ENCODE measurements at regions of chr20 and their contacts with region 1.

Region 1: DNA sequence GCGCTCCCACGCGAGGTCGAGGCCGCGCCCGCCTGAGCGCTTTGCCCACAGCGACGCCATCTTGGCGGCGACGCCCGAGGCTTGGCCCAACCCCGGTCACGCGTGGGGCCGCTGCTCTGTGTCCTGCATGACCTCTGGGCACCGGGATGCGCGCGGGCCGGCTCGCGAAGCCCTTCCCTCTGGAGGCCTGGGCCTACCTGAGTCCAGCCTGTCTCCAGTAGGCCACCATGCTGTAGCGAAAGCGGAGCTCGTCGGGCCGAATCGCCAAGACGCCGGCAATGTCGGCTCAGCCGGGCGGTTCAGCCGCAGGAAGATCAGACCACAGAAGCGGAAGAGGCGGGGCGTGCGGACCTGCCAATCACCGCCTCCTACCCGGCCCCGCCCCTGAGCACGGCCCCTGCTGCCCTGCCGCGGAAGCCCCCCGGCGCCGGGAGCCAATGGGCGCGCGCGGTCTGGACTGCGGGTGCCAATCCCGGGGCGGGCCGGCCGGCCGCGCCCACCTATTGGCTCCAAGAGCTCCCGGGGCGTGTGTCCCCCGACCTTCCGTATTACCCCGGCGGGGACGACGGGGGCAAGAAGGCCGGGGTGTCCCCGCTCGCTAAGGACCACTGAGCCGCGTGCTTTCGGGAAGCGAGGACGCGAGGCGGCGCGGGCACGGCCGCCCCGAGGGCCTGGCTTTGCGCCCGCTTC is at the start of gene ATP5F1E:
- DNase-seq: peak; percentile 94 to 99 (median 96)
- ATAC-seq: peak; percentile 95
- H3K4me3 ChIP-seq: peak within 1 kb of the TSS; percentile 76
- H3K4me3 Mint-ChIP-seq: peak within 1 kb of the TSS; percentile 97
- H3K27ac ChIP-seq: peak within 1 kb of the TSS; percentile 81 to 86
- H3K27ac Mint-ChIP-seq: peak within 1 kb of the TSS; percentile 87
- H3K4me1 ChIP-seq: peaks cover 31% of the 10 kb centered on the region
- H3K4me1 Mint-ChIP-seq: peaks cover 61% of the 10 kb centered on the region
- H3K27me3 ChIP-seq: no peaks in the 10 kb centered on the region
- H3K27me3 Mint-ChIP-seq: no peaks in the 10 kb centered on the region
- CTCF ChIP-seq: no peak
- total RNA-seq, gene ATP5F1E: 51.1 to 53.1 TPM

Region 2: DNA sequence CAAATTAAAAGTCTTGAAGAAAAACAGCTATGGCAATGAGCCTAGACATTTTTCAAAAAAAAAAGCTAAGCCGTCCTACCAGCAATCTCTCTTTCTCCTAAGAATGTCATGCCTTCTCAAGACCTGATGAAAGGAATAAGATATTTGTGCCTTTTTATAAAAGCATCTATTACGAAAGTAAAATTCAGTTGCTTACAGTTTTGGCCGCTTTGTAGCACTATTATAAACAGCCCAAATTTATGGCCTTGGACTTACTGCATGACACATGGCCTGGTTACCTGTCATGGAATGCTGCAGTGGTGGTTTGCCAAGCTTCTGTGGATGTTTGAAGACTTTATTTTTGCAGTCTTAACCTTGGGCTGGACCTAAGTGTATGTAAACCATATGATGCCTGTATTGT is 665.3 kb before region 1 on chr20:
- CTCF ChIA-PET with region 1: no interaction called
- POLR2A ChIA-PET with region 1: no interaction called
- intact Hi-C with region 1: no loop called
- DNase-seq: no peak
- ATAC-seq: no peak
- H3K4me3 ChIP-seq: no peak overlapping the region
- H3K4me3 Mint-ChIP-seq: no peak overlapping the region
- H3K27ac ChIP-seq: no peak overlapping the region
- H3K27ac Mint-ChIP-seq: no peak overlapping the region
- H3K4me1 ChIP-seq: no peaks in the 10 kb centered on the region
- H3K4me1 Mint-ChIP-seq: no peaks in the 10 kb centered on the region
- H3K27me3 ChIP-seq: no peaks in the 10 kb centered on the region
- H3K27me3 Mint-ChIP-seq: no peaks in the 10 kb centered on the region
- CTCF ChIP-seq: no peak

Region 3: GRCh38 chr20:58888521-58889333 is 143.4 kb before region 1 on chr20:
- CTCF ChIA-PET with region 1: no interaction called
- POLR2A ChIA-PET with region 1: interaction called, 54 read pairs
- intact Hi-C with region 1: loop called (anchors 2 to 5 kb)
- DNase-seq: peak; percentile 69 to 93 (median 82)
- ATAC-seq: peak; percentile 49
- H3K4me3 ChIP-seq: peak overlapping the region; percentile 83
- H3K4me3 Mint-ChIP-seq: peak overlapping the region; percentile 89
- H3K27ac ChIP-seq: peak overlapping the region; percentile 65 to 72
- H3K27ac Mint-ChIP-seq: peak overlapping the region; percentile 95
- H3K4me1 ChIP-seq: peaks cover 11% of the 10 kb centered on the region
- H3K4me1 Mint-ChIP-seq: peaks cover 52% of the 10 kb centered on the region
- H3K27me3 ChIP-seq: no peaks in the 10 kb centered on the region
- H3K27me3 Mint-ChIP-seq: no peaks in the 10 kb centered on the region
- CTCF ChIP-seq: no peak

Region 4: DNA sequence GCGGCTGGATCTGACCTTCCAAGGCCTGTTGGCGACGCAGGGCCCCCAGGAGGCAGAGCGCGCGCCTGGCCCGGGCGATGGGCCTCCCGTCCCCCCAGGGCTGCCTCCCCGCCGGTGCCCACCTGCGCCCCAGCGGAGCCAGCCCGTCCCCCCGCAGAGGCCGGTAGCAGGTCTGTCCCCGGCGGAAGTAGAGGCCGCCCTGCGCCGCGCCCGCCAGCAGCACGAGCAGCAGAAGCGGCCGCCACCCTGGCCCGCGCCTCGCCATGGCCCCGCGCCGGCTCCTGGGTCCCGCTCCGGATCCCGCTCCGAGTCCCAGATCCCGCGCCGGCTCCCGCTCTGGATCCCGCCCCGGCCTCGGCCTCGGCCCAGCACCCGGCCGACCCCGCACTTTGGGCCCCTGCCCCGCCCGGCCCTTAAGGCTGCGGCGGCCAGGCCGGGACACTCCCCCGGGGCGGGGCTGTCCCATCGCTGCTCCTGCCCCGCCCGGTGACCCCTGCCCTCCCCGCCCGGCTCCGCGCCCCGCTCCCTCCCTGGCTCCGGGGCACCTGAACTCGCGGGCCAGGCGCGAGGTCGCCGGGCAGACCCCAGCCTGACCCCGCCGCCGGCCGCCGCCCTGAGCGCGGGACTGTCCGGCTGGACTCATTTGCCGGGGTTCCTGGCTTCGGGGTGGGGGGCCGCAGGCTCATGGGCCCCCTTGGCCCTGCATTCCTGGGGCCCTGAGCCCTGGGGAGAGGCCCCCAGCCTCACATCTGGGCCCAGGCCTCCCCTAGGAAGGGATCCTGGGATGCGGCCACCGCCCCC is 25.1 kb before region 1 on chr20 and contains the start of gene CTSZ:
- CTCF ChIA-PET with region 1: interaction called, 3 read pairs
- POLR2A ChIA-PET with region 1: interaction called, 17 read pairs
- intact Hi-C with region 1: loop called in 1 of 2 experiments (anchors 2 kb)
- DNase-seq: peak in 10 of 14 experiments; percentile 14 to 73 (median 36)
- ATAC-seq: peak; percentile 55
- H3K4me3 ChIP-seq: peak within 1 kb of the TSS; percentile 72
- H3K4me3 Mint-ChIP-seq: peak within 1 kb of the TSS; percentile 88
- H3K27ac ChIP-seq: peak within 1 kb of the TSS in 1 of 2 donors; percentile 48
- H3K27ac Mint-ChIP-seq: peak within 1 kb of the TSS; percentile 78
- H3K4me1 ChIP-seq: peaks cover 45% of the 10 kb centered on the region
- H3K4me1 Mint-ChIP-seq: peaks cover 42% of the 10 kb centered on the region
- H3K27me3 ChIP-seq: no peaks in the 10 kb centered on the region
- H3K27me3 Mint-ChIP-seq: no peaks in the 10 kb centered on the region
- CTCF ChIP-seq: no peak
- total RNA-seq, gene CTSZ: 14.7 to 17.7 TPM

Region 5: DNA sequence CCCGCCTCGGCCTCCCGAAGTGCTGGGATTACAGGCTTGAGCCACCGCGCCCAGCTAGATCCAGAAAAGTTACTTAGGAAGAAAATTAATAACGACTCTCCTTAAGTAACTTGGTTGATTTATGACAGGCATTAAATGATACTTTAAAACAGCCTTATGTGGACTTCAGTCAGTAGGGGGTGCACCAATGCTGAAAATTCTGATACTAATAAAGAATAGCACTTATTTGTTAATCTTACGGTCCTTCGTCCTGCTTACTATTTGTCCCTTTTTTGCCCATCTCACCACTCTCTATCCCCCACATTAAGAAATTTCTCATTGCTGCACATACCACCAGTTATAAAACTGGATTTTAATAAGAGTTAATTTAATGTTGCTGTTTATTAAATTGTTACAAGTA is 23.1 kb after region 1 on chr20:
- CTCF ChIA-PET with region 1: interaction called, 3 read pairs
- POLR2A ChIA-PET with region 1: interaction called, 12 read pairs
- intact Hi-C with region 1: no loop called
- DNase-seq: peak in 4 of 14 experiments; percentile 40 to 58 (median 53)
- ATAC-seq: no peak
- H3K4me3 ChIP-seq: no peak overlapping the region
- H3K4me3 Mint-ChIP-seq: no peak overlapping the region
- H3K27ac ChIP-seq: no peak overlapping the region
- H3K27ac Mint-ChIP-seq: no peak overlapping the region
- H3K4me1 ChIP-seq: no peaks in the 10 kb centered on the region
- H3K4me1 Mint-ChIP-seq: no peaks in the 10 kb centered on the region
- H3K27me3 ChIP-seq: peaks cover 6 to 7% of the 10 kb centered on the region in 2 experiments
- H3K27me3 Mint-ChIP-seq: peaks cover 24% of the 10 kb centered on the region
- CTCF ChIP-seq: no peak

Region 6: DNA sequence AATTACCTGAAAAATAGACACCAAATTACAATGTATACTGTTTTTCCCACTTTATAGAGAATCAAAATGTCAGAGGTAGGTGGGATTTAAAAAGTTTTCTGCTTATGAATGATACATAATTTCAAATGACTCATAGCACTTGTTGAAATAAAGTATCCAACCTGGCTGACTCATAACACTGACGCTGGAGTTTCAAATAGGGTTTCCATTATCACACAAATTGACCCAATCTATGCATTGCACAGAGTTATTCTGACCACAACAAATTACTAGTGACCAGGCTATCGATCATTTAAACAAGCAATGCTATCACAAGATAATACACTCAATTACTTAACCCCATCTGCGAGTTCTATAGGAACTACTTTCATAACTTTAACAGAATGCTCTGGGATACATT is 42.3 kb after region 1 on chr20:
- CTCF ChIA-PET with region 1: no interaction called
- POLR2A ChIA-PET with region 1: no interaction called
- intact Hi-C with region 1: no loop called
- DNase-seq: no peak
- ATAC-seq: no peak
- H3K4me3 ChIP-seq: no peak overlapping the region
- H3K4me3 Mint-ChIP-seq: no peak overlapping the region
- H3K27ac ChIP-seq: no peak overlapping the region
- H3K27ac Mint-ChIP-seq: no peak overlapping the region
- H3K4me1 ChIP-seq: no peaks in the 10 kb centered on the region
- H3K4me1 Mint-ChIP-seq: no peaks in the 10 kb centered on the region
- H3K27me3 ChIP-seq: peaks cover 0 to 9% of the 10 kb centered on the region in 2 experiments
- H3K27me3 Mint-ChIP-seq: peaks cover 44% of the 10 kb centered on the region
- CTCF ChIP-seq: no peak

Region 7: DNA sequence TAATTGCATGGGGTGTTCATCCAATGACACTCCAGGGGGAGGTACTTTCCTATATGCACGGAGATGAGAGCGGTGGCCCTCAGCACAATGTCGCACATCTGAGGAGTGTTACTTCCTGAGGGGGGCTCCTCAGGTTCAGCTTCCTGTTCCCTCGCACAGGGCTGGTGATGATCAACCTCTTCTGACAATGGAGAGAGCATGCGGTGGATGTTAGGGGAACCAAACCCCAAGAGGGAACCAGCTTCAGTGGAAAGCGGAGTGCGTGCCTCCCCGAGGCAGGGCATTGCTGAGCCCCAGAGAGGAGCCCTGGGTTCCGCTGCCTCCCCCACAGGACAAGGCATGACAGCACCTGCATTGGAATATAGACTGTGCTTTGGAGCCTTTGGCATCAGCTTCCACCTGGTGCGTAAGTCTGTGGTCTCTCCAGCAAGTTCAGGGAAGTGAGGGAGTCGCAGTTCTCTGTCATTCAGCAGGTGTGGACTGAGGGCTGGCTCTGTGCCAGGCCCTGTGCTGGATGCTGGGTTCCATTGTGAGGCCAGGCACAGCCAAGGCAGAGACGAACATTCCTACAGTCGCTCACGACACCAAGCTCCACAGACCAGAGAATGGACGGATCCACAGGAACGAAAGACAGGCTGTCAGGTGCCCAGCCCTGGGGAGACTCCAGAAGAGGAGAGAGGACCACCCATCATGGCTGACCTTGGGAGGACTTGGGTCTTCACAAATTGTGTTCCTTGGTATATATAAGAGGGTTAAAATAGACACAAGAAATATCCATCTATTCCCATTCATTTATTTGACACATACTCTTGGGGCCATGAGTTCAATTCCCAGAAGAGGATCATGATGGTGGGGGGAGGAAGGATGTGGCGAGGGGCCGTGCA is 127.6 kb after region 1 on chr20:
- CTCF ChIA-PET with region 1: no interaction called
- POLR2A ChIA-PET with region 1: interaction called, 14 read pairs
- intact Hi-C with region 1: loop called (anchors 5 kb)
- DNase-seq: peak; percentile 47 to 93 (median 66)
- ATAC-seq: peak; percentile 81
- H3K4me3 ChIP-seq: peak overlapping the region; percentile 70
- H3K4me3 Mint-ChIP-seq: peak overlapping the region; percentile 89
- H3K27ac ChIP-seq: peak overlapping the region; percentile 94 to 95
- H3K27ac Mint-ChIP-seq: peak overlapping the region; percentile 95
- H3K4me1 ChIP-seq: peaks cover 68% of the 10 kb centered on the region
- H3K4me1 Mint-ChIP-seq: peaks cover 98% of the 10 kb centered on the region
- H3K27me3 ChIP-seq: no peaks in the 10 kb centered on the region
- H3K27me3 Mint-ChIP-seq: no peaks in the 10 kb centered on the region
- CTCF ChIP-seq: no peak

Region 8: DNA sequence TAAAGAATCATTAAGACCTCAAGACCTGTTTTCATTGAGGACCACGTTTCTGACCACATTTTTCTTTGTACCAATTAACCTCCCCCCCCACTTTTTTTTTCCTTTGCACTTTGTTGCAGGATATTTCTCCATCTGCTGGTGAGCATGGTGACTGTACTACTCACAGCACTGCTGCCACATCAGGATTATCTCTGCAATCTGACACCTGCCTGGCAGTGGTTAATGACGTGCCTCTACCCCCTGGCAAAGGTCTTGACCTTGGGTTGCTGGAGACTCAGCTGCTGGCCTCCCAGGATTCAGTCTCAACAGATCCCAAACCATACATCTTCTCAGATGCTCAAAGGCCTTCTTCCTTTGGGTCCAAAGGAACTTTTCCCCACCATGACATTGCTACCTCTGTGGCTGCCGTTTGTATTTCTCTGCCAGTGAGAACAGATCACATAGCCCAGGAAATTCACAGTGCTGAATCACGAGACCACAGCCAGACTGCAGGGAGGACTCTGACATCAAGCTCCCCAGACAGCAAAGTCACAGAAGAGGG is 221.7 kb after region 1 on chr20:
- CTCF ChIA-PET with region 1: no interaction called
- POLR2A ChIA-PET with region 1: interaction called, 12 read pairs
- intact Hi-C with region 1: no loop called
- DNase-seq: peak in 12 of 14 experiments; percentile 11 to 64 (median 30)
- ATAC-seq: peak; percentile 63
- H3K4me3 ChIP-seq: no peak overlapping the region
- H3K4me3 Mint-ChIP-seq: peak overlapping the region; percentile 78
- H3K27ac ChIP-seq: peak overlapping the region; percentile 46 to 51
- H3K27ac Mint-ChIP-seq: peak overlapping the region; percentile 94
- H3K4me1 ChIP-seq: peaks cover 28% of the 10 kb centered on the region
- H3K4me1 Mint-ChIP-seq: peaks cover 82% of the 10 kb centered on the region
- H3K27me3 ChIP-seq: no peaks in the 10 kb centered on the region
- H3K27me3 Mint-ChIP-seq: no peaks in the 10 kb centered on the region
- CTCF ChIP-seq: no peak

Measured in CD4-positive, alpha-beta T cell (primary cell).